Sigmoid colon (tissue), 7 donors: ENCODE measurements at regions of chr12 and their contacts with region 1.

Region 1: DNA sequence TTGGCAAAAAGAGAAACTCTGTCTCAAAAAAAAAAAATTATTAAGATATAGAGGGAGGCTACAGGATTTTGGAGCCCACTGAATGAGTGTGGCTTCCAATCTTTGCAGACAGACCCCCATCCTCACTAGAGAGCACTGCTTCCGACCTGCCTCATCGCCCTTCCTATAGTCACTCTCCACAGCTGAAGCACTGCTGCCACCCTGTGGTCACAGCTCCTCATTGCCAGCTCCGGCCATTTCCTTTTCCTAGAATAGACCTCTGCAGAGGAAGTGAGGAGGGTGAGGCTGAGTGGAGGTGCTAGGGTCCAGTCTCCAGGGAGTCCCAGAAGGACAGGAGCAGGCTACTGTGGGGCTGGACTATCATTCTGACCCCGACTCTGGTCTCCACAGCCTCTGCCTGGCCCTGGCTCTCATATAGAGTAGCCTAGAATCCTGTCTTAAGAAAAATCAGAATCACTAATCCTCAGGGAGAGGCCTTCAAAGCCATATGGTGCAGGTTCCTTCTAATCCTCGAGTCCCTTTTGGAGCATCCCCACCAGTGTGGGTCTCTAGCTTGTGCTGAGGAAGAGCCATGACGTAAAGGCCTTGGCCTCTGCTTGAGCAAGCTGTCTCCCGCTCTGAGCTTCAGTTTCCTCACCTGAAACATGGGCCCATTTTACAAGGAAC is 1.4 kb upstream of the NPFF start:
- DNase-seq: peak; percentile 88
- H3K4me3 ChIP-seq: no peak overlapping the region
- H3K27ac ChIP-seq: peak overlapping the region; percentile 8 to 44 (median 34)
- H3K4me1 ChIP-seq: peaks cover 0 to 7% (median 6%) of the 10 kb centered on the region in 4 donors
- H3K27me3 ChIP-seq: no peaks in the 10 kb centered on the region
- CTCF ChIP-seq: peak; percentile 81 to 89 (median 87)
- EP300 ChIP-seq: no peak
- POLR2A ChIP-seq: no peak

Region 2: GRCh38 chr12:53352331-53353256 is 156.1 kb before region 1 on chr12:
- intact Hi-C with region 1: loop called (anchors 2 kb)
- DNase-seq: peak; percentile 92
- H3K4me3 ChIP-seq: no peak overlapping the region
- H3K27ac ChIP-seq: no peak overlapping the region
- H3K4me1 ChIP-seq: peaks cover 0 to 8% (median 4%) of the 10 kb centered on the region in 4 donors
- H3K27me3 ChIP-seq: no peaks in the 10 kb centered on the region
- CTCF ChIP-seq: peak; percentile 83 to 94 (median 90)
- EP300 ChIP-seq: no peak
- POLR2A ChIP-seq: no peak

Region 3: DNA sequence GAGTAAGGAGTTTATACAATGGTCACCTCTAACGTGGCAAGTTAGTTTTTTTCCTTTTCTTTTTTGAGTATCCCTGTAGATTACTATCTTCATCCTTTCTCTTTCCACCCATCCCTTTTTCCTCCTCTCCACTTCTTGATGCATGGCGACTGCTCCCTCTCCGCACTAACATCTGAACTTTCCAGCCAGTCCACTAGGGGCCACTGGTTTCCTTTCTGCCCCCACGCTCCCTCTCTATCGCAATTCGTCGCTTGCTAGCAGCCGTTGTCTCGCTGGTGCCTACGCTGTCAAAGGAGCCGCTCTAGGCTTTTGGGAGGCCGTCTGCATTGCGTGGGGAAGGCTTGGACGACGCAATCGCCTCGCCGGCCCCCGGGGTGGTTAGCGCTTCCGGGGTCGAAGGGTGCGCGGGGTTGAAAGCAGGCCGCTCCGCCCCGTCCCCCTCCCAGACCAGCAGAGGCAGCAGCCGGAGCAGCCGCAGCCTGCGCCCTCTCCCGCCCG is 57.0 kb before region 1 on chr12 and contains the start of gene PCBP2:
- intact Hi-C with region 1: loop called (anchors 2 kb)
- DNase-seq: peak; percentile 99
- H3K4me3 ChIP-seq: peak within 1 kb of the TSS; percentile 65 to 76 (median 70)
- H3K27ac ChIP-seq: peak within 1 kb of the TSS; percentile 90 to 98 (median 96)
- H3K4me1 ChIP-seq: peaks cover 0 to 26% (median 22%) of the 10 kb centered on the region in 4 donors
- H3K27me3 ChIP-seq: no peaks in the 10 kb centered on the region
- CTCF ChIP-seq: peak; percentile 77 to 97 (median 95)
- EP300 ChIP-seq: peak in 2 of 4 donors; percentile 47 to 48
- POLR2A ChIP-seq: peak; percentile 32 to 37
- total RNA-seq, gene PCBP2: 397 to 661 (median 417) TPM

Region 4: GRCh38 chr12:53613821-53614220 is 105.2 kb after region 1 on chr12:
- intact Hi-C with region 1: no loop called
- DNase-seq: no peak
- H3K4me3 ChIP-seq: no peak overlapping the region
- H3K27ac ChIP-seq: no peak overlapping the region
- H3K4me1 ChIP-seq: peaks cover 0 to 30% (median 23%) of the 10 kb centered on the region in 4 donors
- H3K27me3 ChIP-seq: no peaks in the 10 kb centered on the region
- CTCF ChIP-seq: no peak
- EP300 ChIP-seq: no peak
- POLR2A ChIP-seq: no peak

Region 5: DNA sequence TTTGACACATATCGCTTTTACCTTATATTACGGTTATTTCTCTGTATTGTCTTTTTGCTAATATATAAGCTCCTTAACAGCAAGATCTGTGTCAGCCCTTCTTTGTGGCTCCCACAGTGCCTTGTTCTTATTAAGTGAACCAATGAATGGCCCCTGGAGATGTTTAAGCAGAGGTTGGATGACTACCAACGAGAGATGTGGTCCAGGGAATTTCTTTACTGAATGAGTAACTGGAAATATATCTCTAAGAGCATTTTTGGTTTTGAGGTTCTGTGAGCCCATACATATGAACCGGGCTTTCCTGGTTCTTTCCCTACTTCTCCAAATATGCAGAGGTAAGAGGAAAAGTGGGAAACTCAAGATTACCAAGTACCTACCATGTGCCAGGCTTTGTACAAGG is 195.1 kb after region 1 on chr12:
- intact Hi-C with region 1: no loop called
- DNase-seq: no peak
- H3K4me3 ChIP-seq: no peak overlapping the region
- H3K27ac ChIP-seq: no peak overlapping the region
- H3K4me1 ChIP-seq: no peaks in the 10 kb centered on the region
- H3K27me3 ChIP-seq: peaks cover 8 to 71% (median 37%) of the 10 kb centered on the region in 3 donors
- CTCF ChIP-seq: no peak
- EP300 ChIP-seq: no peak
- POLR2A ChIP-seq: no peak